ENCODE measurements at regions of chr9 and their contacts with region 1.

Region 1: DNA sequence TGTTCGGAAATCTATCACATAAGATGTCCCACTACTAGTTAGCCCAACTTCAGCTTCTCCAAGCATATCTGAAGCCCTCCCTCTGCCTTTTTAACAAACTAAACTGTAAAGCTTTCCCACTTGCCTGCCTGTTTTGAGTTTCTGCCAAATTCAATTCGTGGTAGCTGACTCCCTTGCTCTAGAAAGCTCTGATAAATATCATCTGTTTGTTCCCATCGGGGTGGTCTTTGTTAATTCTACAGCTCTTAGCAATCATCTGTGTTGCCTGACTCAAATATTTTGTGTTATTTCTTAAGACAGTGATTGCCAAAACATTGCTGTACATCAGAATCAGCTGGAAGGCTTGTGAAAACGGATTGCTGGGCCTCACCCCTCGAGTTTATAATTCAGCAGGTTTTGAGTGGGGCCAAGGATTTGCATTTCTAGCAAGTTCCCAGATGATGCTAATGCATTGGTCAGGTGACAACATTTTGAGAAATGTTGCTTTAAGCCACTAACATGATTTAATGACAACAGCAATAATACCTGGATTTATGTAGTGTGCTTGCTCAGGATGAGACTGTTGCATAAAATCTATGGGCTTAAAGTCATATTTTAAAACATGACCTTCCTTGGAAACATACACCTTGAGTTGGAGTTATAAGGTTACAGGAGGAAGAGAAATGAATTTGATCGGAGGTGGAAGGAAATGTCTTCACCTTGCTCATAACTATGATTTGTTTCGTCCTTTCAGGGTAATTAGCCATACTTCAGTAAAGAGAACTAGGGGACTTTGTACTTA is 631.9 kb downstream of the PSAT1 start:
- DNase-seq: no peak
- ATAC-seq: no peak
- H3K4me3 Mint-ChIP-seq: no peak overlapping the region
- H3K27ac Mint-ChIP-seq: no peak overlapping the region
- H3K4me1 Mint-ChIP-seq: no peaks in the 10 kb centered on the region
- H3K27me3 Mint-ChIP-seq: peaks cover 2% of the 10 kb centered on the region
- CTCF ChIP-seq: no peak

Region 2: DNA sequence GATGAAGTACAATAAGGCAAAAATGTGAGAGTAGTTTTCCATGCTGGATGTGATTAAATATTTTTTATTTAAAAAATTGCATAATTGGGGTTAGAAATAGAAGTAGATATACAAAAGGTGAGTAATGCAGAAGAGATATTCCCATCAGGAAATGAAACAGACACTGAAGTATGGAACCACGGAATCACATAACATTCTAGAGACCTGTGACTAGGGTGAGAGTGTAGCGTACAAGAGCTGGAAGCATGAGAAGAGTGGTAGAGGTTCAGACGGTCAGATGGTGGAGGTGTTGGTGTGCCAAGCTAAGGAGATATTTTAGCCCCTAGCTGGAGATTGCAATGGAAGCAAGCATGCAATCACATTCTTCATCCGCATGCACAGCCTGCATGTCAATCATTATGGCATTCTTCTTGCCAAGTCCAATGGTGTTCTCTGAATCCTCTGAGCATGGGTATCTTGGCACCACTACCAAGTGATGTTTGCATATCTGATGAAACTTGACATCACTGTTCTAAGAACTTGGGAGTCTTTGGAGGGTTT is 44.1 kb before region 1 on chr9:
- CTCF ChIA-PET with region 1: no interaction called
- POLR2A ChIA-PET with region 1: no interaction called
- intact Hi-C with region 1: no loop called
- DNase-seq: no peak
- ATAC-seq: no peak
- H3K4me3 Mint-ChIP-seq: no peak overlapping the region
- H3K27ac Mint-ChIP-seq: no peak overlapping the region
- H3K4me1 Mint-ChIP-seq: no peaks in the 10 kb centered on the region
- H3K27me3 Mint-ChIP-seq: no peaks in the 10 kb centered on the region
- CTCF ChIP-seq: no peak

Region 3: DNA sequence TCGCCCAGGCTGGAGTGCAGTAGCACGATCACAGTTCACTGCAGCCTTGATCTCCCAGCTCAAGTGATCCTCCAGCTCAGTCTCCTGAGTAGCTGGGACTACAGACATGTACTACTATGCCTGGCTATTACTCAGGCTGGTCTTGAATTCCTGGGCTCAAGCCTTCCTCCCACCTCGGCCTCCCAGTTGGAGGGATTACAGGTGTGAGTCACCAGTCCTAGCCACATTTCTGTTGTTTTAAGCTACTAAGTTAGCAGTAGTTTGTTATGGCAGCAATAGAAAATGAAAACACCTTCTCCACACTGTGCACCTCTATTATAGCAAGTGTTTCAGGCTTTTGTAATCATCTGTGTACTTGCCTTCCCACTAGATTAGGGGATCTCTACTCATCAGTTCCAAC is 54.0 kb after region 1 on chr9:
- CTCF ChIA-PET with region 1: no interaction called
- POLR2A ChIA-PET with region 1: no interaction called
- intact Hi-C with region 1: loop called (anchors 10 kb)
- DNase-seq: no peak
- ATAC-seq: no peak
- H3K4me3 Mint-ChIP-seq: no peak overlapping the region
- H3K27ac Mint-ChIP-seq: no peak overlapping the region
- H3K4me1 Mint-ChIP-seq: no peaks in the 10 kb centered on the region
- H3K27me3 Mint-ChIP-seq: no peaks in the 10 kb centered on the region
- CTCF ChIP-seq: no peak